ENCODE measurements at regions of chr18 and their contacts with region 1.

Region 1: DNA sequence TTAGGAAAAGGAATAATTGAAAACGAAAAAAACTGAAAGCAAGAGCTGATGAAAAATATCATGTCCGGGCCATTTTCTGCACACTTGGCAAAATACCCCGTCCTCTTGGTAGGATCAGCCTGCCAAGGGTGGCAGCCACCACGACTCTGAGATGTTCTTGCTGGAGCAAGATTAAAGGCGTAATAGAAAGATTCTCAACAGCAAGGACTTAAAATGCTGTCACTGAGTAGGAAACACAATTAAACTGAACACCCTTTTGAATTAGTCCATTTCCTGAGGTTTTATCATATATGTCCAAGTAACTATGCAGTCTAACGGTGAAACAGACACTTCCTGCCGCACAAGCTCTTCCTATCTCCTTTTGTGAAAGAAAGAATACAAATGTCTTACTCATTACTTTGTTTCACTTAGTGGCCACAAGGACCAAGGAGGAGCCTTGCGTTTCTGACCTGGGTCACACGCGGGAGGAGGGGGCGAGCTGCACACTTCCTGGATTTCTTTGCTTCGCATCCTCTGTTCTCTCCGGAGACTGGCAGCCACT is 222.7 kb downstream of the PIEZO2 start:
- DNase-seq: peak; percentile 33
- H3K4me3 Mint-ChIP-seq: peak overlapping the region; percentile 40
- H3K27ac Mint-ChIP-seq: peak overlapping the region; percentile 89
- H3K4me1 Mint-ChIP-seq: peaks cover 54% of the 10 kb centered on the region
- H3K27me3 Mint-ChIP-seq: no peaks in the 10 kb centered on the region
- CTCF ChIP-seq: no peak

Region 2: DNA sequence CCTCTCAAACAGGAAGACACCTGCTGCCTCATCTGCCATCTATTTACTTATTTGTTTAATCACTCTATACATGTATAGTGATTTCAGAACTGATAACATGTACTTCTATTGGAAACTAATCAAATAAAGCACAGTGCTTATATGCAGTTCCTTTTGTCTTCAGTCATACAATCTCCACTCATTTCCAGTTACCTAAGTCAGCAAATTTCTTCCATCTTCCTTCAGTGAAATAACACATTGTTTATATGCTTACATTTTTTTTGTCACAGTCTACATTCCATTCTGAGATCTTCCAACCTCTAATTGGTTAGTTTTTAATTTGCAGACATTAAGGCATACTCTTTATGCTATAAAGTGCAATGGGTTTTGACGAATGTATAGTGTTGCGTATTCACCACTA is 100.3 kb before region 1 on chr18:
- CTCF ChIA-PET with region 1: no interaction called
- POLR2A ChIA-PET with region 1: no interaction called
- intact Hi-C with region 1: no loop called
- DNase-seq: no peak
- H3K4me3 Mint-ChIP-seq: no peak overlapping the region
- H3K27ac Mint-ChIP-seq: no peak overlapping the region
- H3K4me1 Mint-ChIP-seq: no peaks in the 10 kb centered on the region
- H3K27me3 Mint-ChIP-seq: no peaks in the 10 kb centered on the region
- CTCF ChIP-seq: no peak

Region 3: DNA sequence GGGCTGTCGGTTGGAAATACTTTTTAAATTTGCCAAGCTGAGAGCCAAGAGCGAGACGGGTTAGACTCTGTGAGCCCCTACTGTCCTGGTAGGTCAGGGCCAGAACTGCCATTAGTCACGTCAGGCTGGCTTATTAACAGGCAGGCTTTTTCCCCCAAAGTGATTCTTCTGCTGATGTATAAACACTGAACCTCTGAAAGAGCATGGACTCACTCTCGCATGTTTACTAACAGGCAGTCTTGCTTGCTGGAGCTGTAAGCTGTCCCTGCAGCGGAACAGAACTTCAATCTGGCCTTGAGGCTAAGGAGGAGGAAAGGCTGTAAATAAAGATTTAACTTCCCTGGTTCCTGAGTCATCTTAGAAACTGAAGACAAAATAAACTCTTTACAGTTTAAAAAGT is 65.8 kb before region 1 on chr18:
- CTCF ChIA-PET with region 1: no interaction called
- POLR2A ChIA-PET with region 1: no interaction called
- intact Hi-C with region 1: no loop called
- DNase-seq: no peak
- H3K4me3 Mint-ChIP-seq: no peak overlapping the region
- H3K27ac Mint-ChIP-seq: no peak overlapping the region
- H3K4me1 Mint-ChIP-seq: no peaks in the 10 kb centered on the region
- H3K27me3 Mint-ChIP-seq: peaks cover 11% of the 10 kb centered on the region
- CTCF ChIP-seq: no peak

Region 4: GRCh38 chr18:10973567-10974203 is 47.0 kb after region 1 on chr18:
- CTCF ChIA-PET with region 1: no interaction called
- POLR2A ChIA-PET with region 1: interaction called, 11 read pairs
- intact Hi-C with region 1: no loop called
- DNase-seq: peak; percentile 54
- H3K4me3 Mint-ChIP-seq: peak overlapping the region; percentile 20
- H3K27ac Mint-ChIP-seq: peak overlapping the region; percentile 5
- H3K4me1 Mint-ChIP-seq: peaks cover 11% of the 10 kb centered on the region
- H3K27me3 Mint-ChIP-seq: no peaks in the 10 kb centered on the region
- CTCF ChIP-seq: no peak

Region 5: DNA sequence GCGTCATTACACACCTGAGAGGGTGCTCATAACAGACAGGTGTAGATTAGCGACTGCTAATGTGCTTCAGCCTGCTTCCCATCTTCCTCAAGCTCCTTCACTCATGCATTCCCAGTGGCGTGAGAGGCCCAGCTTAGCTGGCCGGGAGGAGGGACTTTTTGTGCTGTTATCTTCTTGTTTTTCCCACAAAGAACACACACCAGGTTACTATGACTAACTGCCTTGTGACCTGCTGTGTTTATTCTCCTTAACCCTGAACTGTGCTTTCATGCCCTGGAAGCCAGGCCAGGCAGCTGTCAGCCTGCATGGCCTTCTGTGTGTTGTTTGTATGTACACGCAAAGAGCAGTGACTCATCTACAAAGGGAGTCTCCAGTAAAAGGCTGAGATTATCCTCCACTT is 78.8 kb after region 1 on chr18:
- CTCF ChIA-PET with region 1: no interaction called
- POLR2A ChIA-PET with region 1: interaction called, 5 read pairs
- intact Hi-C with region 1: loop called (anchors 2 kb)
- DNase-seq: peak; percentile 56
- H3K4me3 Mint-ChIP-seq: peak overlapping the region; percentile 66
- H3K27ac Mint-ChIP-seq: peak overlapping the region; percentile 93
- H3K4me1 Mint-ChIP-seq: peaks cover 36% of the 10 kb centered on the region
- H3K27me3 Mint-ChIP-seq: no peaks in the 10 kb centered on the region
- CTCF ChIP-seq: no peak

Measured in MCF 10A (cell line).